BJ (cell line): ENCODE measurements at regions of chr15 and their contacts with region 1.

Region 1: GRCh38 chr15:78195735-78196201 is 38.6 kb downstream of the ACSBG1 start:
- DNase-seq: no peak
- H3K4me3 ChIP-seq: no peak overlapping the region
- H3K27me3 ChIP-seq: no peaks in the 10 kb centered on the region; the same call in 1 of the 2 replicates
- CTCF ChIP-seq: peak; percentile 68

Region 2: DNA sequence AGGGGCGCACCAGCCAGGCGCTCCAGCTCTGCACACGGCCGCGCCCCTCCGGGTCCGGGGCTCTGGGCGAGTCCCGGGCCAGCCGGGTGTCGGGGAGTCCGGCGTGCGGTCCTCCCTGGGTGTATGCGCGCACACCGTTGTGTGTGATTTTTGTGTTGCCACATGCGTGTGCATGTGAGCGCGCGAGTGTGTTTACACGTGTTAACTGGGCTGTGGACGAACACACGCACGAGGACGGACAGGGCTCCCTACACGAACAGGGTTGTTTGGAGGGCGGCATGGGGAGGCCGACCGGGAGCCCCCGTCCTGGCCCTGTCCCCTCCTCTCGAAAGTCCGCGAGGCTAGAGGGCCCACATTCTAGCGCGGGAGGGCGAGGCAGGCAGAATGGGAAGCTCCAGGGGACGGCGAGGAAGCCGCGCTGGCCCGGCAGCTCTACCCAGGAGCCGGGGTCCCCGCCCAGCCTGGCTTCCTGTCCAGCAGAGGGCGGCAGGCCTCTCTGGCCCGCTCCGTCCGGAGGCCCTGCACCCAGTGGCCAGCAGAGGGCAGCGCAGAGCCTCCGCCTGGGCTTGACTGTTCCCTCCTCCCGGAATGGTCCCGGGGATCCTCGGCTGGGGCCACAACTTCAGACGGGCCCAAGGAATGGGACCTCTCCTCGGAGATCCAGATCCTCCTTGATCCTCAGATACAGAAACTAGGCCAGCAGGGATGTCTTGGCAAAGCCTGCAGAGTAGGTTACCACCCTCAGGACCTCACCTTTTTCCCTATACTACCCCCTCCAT is 562.4 kb before region 1 on chr15:
- CTCF ChIA-PET with region 1: no interaction called
- POLR2A ChIA-PET with region 1: no interaction called
- DNase-seq: peak; percentile 13
- H3K4me3 ChIP-seq: peak overlapping the region; percentile 32
- H3K27me3 ChIP-seq: peaks cover 35% of the 10 kb centered on the region
- CTCF ChIP-seq: peak; percentile 100

Region 3: GRCh38 chr15:78131295-78132061 is 64.3 kb before region 1 on chr15 and contains the start of gene CIB2:
- CTCF ChIA-PET with region 1: interaction called, 11 read pairs
- POLR2A ChIA-PET with region 1: no interaction called
- DNase-seq: no peak
- H3K4me3 ChIP-seq: peak within 1 kb of the TSS; percentile 66
- H3K27me3 ChIP-seq: no peaks in the 10 kb centered on the region
- CTCF ChIP-seq: peak; percentile 28; the same call in 1 of the 2 replicates
- polyA plus RNA-seq, gene CIB2: 4.5 and 7.4 TPM in 2 replicates

Region 4: DNA sequence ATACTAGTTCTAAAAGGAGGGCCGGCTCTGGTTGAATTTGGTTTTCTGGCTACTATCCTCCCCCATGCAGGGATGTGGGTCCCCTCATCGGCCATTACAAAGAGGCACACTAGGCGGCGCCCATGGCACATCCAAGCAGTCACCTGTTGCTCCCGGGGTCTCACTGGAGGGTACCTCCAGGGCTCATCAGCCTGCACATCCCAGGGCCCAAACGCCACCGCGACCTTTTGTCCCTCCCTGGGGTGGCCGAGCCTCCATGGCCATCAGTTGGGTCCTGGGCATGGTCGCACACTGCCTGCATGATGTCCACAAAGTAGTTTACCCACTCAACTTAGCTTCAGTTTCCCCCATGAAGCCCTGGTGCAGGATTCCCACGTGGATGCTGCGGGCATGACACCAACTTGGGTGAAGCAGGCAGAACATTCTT is 18.3 kb before region 1 on chr15:
- CTCF ChIA-PET with region 1: interaction called, 19 read pairs
- POLR2A ChIA-PET with region 1: no interaction called
- DNase-seq: no peak
- H3K4me3 ChIP-seq: no peak overlapping the region
- H3K27me3 ChIP-seq: peaks cover 1% of the 10 kb centered on the region; the same call in 1 of the 2 replicates
- CTCF ChIP-seq: peak; percentile 84

Region 5: GRCh38 chr15:78182821-78183220 is 12.9 kb before region 1 on chr15:
- CTCF ChIA-PET with region 1: interaction called, 25 read pairs
- POLR2A ChIA-PET with region 1: no interaction called
- DNase-seq: no peak
- H3K4me3 ChIP-seq: no peak overlapping the region
- H3K27me3 ChIP-seq: peaks cover 2% of the 10 kb centered on the region; the same call in 1 of the 2 replicates
- CTCF ChIP-seq: no peak